Activated T-helper 1 cell treated with anti-CD3 and anti-CD28 coated beads, Interleukin-12 subunit alpha, Interleukin-12 subunit beta, Interleukin-2, Interleukin-4 antibody, amounts not matched to agents 30 ng/mL and 10 ng/mL and 1 ng/mL, durations not matched to agents 14 hours and 24 hours and 36 hours (primary cell): ENCODE measurements at regions of chr19 and their contacts with region 1.

Region 1: DNA sequence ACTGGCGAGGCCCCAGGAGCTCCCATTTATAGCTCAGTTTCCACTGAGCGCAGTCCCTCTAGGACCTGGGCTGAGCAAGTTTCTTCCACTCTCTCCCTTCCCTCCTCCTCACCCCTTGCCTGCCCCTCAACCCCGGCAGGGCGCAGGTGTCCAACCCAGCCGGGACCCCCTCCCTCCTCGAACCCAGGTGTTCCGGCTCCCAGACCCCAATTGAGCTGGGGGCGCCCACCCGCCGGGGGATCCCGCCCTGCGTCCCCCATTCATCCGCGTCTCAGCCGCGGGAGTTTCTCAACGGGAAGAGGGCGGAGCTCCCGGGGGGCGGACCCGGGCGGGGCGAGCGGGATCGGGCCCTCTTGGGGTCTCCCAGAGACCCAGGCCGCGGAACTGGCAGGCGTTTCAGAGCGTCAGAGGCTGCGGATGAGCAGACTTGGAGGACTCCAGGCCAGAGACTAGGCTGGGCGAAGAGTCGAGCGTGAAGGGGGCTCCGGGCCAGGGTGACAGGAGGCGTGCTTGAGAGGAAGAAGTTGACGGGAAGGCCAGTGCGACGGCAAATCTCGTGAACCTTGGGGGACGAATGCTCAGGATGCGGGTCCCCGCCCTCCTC is at the start of gene KIRREL2:
- DNase-seq: peak; percentile 45
- H3K4me3 Mint-ChIP-seq: peak within 1 kb of the TSS; percentile 83
- H3K27ac Mint-ChIP-seq: no peak within 1 kb of the TSS
- H3K4me1 Mint-ChIP-seq: peaks cover 17% of the 10 kb centered on the region
- H3K27me3 Mint-ChIP-seq: peaks cover 41% of the 10 kb centered on the region
- total RNA-seq, gene KIRREL2: 1.7 TPM in 2 replicates

Region 2: GRCh38 chr19:35869327-35870123 is 12.9 kb after region 1 on chr19:
- intact Hi-C with region 1: loop called (anchors 1 kb)
- DNase-seq: peak; percentile 85
- H3K4me3 Mint-ChIP-seq: peak overlapping the region; percentile 81
- H3K27ac Mint-ChIP-seq: peak overlapping the region; percentile 42
- H3K4me1 Mint-ChIP-seq: peaks cover 23% of the 10 kb centered on the region
- H3K27me3 Mint-ChIP-seq: peaks cover 26% of the 10 kb centered on the region

Region 3: GRCh38 chr19:35928507-35928906 is 71.9 kb after region 1 on chr19:
- intact Hi-C with region 1: no loop called
- DNase-seq: no peak
- H3K4me3 Mint-ChIP-seq: no peak overlapping the region
- H3K27ac Mint-ChIP-seq: no peak overlapping the region
- H3K4me1 Mint-ChIP-seq: peaks cover 23% of the 10 kb centered on the region
- H3K27me3 Mint-ChIP-seq: peaks cover 6% of the 10 kb centered on the region

Region 4: DNA sequence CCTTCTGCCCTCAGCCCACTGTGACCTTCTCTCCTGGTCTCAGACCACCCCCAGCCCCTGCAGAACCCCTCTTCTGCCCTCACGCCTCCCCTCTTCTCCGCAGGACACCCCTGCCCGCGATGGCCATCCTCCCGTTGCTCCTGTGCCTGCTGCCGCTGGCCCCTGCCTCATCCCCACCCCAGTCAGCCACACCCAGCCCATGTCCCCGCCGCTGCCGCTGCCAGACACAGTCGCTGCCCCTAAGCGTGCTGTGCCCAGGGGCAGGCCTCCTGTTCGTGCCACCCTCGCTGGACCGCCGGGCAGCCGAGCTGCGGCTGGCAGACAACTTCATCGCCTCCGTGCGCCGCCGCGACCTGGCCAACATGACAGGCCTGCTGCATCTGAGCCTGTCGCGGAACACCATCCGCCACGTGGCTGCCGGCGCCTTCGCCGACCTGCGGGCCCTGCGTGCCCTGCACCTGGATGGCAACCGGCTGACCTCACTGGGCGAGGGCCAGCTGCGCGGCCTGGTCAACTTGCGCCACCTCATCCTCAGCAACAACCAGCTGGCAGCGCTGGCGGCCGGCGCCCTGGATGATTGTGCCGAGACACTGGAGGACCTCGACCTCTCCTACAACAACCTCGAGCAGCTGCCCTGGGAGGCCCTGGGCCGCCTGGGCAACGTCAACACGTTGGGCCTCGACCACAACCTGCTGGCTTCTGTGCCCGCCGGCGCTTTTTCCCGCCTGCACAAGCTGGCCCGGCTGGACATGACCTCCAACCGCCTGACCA is 82.8 kb after region 1 on chr19:
- intact Hi-C with region 1: no loop called
- DNase-seq: no peak
- H3K4me3 Mint-ChIP-seq: no peak overlapping the region
- H3K27ac Mint-ChIP-seq: no peak overlapping the region
- H3K4me1 Mint-ChIP-seq: peaks cover 29% of the 10 kb centered on the region
- H3K27me3 Mint-ChIP-seq: no peaks in the 10 kb centered on the region

Region 5: DNA sequence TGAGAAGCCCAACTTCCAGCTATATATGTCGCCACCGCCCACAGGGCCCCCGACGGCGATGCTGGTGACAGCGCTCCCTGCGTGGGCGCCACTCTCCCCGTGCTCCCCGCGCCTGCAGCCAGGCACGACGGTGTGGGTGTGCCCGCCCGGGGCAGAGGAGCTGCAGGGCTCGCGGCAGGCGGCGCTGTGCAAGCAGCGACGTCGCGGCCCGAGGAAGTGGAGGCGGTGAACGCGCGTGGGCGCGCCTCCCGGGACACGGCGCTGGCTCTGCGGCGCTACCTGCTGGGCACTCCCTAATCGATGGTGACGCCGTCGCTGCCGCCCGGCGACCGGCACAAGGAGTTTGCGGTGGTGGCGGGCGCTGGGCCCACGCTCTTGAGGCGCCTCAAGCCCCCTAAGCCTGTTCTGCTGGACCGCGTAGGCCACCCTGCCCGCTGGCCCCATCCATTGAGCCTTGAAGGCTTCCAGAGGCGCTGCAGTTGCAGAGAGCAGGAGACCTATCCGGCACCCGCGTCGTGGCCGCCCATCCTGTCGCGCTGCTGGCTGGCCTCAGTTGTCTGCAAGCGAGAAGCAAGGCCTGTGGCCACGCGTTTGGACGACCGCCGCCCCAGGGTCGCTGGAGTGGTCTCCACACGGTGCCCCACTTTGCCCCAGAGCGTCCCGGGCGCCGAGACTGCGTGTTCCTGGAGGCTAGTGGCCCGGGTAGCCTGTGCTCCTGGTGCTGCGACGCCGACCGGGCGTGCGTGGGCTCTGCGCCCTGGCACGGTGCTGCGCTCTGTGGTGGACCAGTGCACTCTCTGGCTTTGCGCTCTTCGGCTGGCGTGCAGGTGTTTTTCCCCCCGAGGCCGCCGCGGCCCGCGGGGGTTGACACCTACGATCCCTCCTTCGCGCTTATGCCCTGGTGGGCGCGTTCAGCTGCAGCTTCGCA is 102.7 kb after region 1 on chr19:
- intact Hi-C with region 1: no loop called
- DNase-seq: peak; percentile 75
- H3K4me3 Mint-ChIP-seq: peak overlapping the region; percentile 19
- H3K27ac Mint-ChIP-seq: no peak overlapping the region
- H3K4me1 Mint-ChIP-seq: peaks cover 11% of the 10 kb centered on the region
- H3K27me3 Mint-ChIP-seq: peaks cover 14% of the 10 kb centered on the region

Region 6: GRCh38 chr19:36819130-36819630 is 962.5 kb after region 1 on chr19:
- intact Hi-C with region 1: no loop called
- DNase-seq: no peak
- H3K4me3 Mint-ChIP-seq: no peak overlapping the region
- H3K27ac Mint-ChIP-seq: no peak overlapping the region
- H3K4me1 Mint-ChIP-seq: no peaks in the 10 kb centered on the region
- H3K27me3 Mint-ChIP-seq: no peaks in the 10 kb centered on the region